Heart left ventricle (tissue), 16 donors: ENCODE measurements at regions of chr10 and their contacts with region 1.

Region 1: DNA sequence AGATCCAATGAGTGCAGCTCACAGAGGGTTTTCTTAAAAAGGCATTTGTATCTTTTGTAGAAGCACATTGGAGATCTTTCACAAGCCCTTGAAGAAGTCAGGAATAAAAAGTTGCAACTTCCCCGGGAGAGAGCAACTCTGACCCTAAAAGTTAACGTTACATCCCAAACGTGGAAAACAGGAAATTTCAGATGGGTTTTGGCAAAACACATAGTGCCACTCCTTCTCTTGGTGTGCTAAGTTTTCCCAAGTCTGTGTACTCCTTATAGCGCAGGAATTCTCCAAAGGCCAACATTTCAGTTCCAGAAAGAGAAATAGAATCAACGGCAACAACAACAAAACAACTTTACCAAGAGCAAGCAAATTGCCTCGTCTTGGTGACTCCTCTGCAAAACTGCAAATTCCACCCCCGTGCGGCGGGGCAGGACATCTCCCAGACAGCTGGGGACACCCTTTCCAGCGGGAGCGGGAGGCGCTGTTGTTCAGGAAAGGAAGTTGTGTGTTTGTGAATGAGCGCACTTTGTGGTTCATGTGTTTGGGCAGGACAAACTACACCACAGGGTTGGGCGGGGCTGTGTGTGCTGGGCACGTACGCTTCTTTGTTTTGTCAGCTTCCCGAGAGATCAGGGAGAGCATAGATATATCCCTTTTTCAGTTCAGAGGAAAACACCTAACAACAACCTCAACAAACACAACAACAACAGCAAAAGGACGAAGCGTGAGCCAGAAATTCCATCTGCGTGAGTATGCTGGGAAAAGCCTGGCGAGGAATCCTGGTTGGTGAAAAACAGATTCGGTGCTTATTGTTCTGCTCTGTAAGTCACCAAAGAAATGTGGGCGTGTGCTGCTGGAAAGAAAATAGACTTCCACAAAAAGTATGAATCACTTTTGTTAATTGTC is 294.7 kb upstream of the PITRM1 start:
- DNase-seq: peak; percentile 80 to 90 (median 85)
- ATAC-seq: peak; percentile 60 to 85 (median 82)
- H3K4me3 ChIP-seq: peak overlapping the region in 9 of 12 donors; percentile 4 to 40 (median 29)
- H3K27ac ChIP-seq: peak overlapping the region; percentile 74 to 97 (median 92)
- H3K4me1 ChIP-seq: peaks cover 0 to 69% (median 46%) of the 10 kb centered on the region in 12 donors
- H3K27me3 ChIP-seq: no peaks in the 10 kb centered on the region
- CTCF ChIP-seq: peak; percentile 35 to 75 (median 54)
- POLR2A ChIP-seq: no peak

Region 2: DNA sequence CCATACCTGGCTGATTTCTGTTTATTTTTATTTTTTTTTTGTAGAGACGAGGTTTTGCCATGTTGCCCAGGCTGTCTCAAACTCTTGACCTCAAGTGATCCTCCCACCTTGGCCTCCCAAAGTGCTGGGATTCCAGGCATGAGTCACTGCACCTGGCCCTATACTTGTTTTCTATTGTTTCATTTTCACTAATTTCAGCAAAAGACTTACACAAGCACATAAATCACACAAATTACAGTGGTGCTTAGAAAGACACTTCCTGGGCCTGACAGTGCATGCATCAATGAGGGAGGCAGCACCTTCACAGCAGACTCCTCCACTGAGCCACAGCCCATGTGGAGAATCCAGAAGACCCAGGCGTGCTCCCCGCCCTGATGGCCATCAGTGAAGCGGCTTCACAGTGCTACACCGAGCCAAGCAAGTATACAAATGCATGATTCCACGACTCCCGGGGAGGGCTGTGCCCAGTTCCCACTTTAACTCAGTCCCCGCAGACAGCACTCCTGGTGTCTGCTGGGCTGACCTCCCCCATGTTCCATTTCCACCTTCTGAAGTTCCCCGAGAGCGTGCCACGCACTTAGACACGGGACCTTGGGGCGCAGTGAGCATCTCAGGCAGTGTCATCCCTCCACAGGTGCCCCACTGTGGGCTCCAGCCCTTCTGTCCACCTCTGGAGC is 315.3 kb before region 1 on chr10:
- intact Hi-C with region 1: no loop called
- DNase-seq: no peak
- ATAC-seq: no peak
- H3K4me3 ChIP-seq: no peak overlapping the region
- H3K27ac ChIP-seq: no peak overlapping the region
- H3K4me1 ChIP-seq: no peaks in the 10 kb centered on the region
- H3K27me3 ChIP-seq: no peaks in the 10 kb centered on the region
- CTCF ChIP-seq: no peak
- POLR2A ChIP-seq: no peak

Region 3: GRCh38 chr10:3248888-3249758 is 218.2 kb before region 1 on chr10:
- intact Hi-C with region 1: loop called in 2 of 10 experiments (anchors 5 to 10 kb)
- DNase-seq: no peak
- ATAC-seq: peak in 3 of 4 donors; percentile 77 to 92 (median 79)
- H3K4me3 ChIP-seq: no peak overlapping the region
- H3K27ac ChIP-seq: peak overlapping the region in 7 of 12 donors; percentile 15 to 61 (median 48)
- H3K4me1 ChIP-seq: peaks cover 0 to 5% (median 0%) of the 10 kb centered on the region in 12 donors
- H3K27me3 ChIP-seq: no peaks in the 10 kb centered on the region
- CTCF ChIP-seq: no peak
- POLR2A ChIP-seq: no peak

Region 4: GRCh38 chr10:3347413-3348182 is 119.7 kb before region 1 on chr10:
- intact Hi-C with region 1: no loop called
- DNase-seq: no peak
- ATAC-seq: no peak
- H3K4me3 ChIP-seq: no peak overlapping the region
- H3K27ac ChIP-seq: no peak overlapping the region
- H3K4me1 ChIP-seq: no peaks in the 10 kb centered on the region
- H3K27me3 ChIP-seq: no peaks in the 10 kb centered on the region
- CTCF ChIP-seq: no peak
- POLR2A ChIP-seq: no peak

Region 5: DNA sequence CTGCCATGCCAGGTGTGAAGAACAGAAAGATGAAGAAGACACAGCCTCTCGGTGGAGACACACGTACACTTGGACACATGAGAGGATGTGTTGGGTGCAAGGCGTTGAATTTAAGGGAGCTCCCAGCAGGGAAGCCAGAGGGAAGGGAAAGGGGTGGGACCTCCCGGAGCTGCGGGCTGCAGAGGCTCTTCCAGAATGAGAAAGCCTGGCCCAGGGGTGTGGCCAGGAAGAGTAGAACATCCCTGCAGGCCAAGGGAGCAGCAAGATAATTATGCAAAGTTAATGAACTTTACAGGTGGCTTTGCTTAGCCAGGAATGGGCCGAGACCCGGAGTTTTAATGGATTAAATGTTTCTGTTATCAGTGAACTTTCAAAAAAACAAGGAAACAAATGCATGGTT is 47.4 kb after region 1 on chr10:
- intact Hi-C with region 1: loop called in 1 of 10 experiments (anchors 2 kb)
- DNase-seq: peak in 1 of 5 donors; percentile 48
- ATAC-seq: peak in 3 of 4 donors; percentile 39 to 84 (median 64)
- H3K4me3 ChIP-seq: peak overlapping the region in 2 of 12 donors; percentile 35 to 39
- H3K27ac ChIP-seq: peak overlapping the region in 4 of 12 donors; percentile 2 to 42 (median 26)
- H3K4me1 ChIP-seq: peaks cover 0 to 8% (median 0%) of the 10 kb centered on the region in 12 donors
- H3K27me3 ChIP-seq: no peaks in the 10 kb centered on the region
- CTCF ChIP-seq: no peak
- POLR2A ChIP-seq: no peak

Region 6: DNA sequence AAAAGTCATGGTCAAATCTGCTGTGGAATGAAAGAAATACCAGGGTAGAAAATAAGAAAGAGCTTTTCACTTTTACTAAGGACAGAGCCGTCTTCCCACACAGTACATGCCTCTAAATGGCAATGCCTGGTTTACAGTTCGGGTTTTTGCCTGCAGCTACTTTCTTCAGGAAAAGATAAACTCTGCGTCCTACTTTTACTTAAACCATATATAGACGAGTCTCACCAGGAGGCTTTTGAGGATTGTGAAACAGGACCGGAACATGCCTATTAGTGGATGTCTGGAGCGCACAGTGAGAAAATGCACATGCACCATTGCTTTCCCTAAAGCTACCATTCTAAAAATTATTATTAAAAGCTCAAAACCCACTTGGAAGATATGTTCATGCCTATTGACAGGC is 247.2 kb after region 1 on chr10:
- intact Hi-C with region 1: no loop called
- DNase-seq: no peak
- ATAC-seq: no peak
- H3K4me3 ChIP-seq: no peak overlapping the region
- H3K27ac ChIP-seq: no peak overlapping the region
- H3K4me1 ChIP-seq: no peaks in the 10 kb centered on the region
- H3K27me3 ChIP-seq: no peaks in the 10 kb centered on the region
- CTCF ChIP-seq: no peak
- POLR2A ChIP-seq: no peak

Region 7: DNA sequence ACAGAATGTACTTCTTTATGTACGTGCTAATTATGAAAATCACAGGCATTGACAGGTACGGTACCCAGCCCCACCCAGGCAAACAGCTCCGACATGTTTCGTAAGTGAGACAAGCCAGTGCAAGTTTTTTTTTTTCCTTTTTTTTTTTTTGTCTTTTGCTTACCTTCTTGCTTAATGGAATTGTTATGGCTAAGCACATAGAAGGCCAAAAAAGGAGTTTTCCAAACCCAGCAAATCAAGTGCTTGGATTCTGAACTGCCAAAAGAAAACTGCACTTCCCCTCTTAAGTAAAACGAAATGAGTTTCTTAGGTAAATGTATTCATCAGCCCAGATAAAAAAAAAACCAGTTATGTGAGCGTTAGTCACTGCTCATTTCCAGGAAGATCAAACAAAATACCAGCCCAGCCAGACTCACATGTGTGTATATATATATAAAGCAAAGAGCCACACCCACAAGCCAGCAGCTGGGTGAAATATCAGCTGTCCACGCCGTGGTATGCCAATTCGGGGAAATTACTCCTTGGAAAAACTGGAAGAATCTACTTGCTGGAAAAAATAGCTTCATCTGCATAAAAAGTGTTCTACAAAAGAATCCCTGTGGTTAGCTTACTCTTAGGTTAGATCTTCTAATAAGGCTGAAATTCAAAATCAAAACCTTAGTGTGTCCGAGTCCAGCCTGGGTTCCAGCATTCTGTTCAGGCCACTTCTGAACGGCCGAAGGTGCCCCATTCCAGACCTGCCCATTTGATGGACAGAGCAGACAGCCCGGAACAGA is 309.7 kb after region 1 on chr10:
- intact Hi-C with region 1: loop called in 6 of 10 experiments (anchors 5 to 10 kb)
- DNase-seq: peak in 3 of 5 donors; percentile 49 to 61 (median 51)
- ATAC-seq: peak in 3 of 4 donors; percentile 30 to 36 (median 34)
- H3K4me3 ChIP-seq: peak overlapping the region in 2 of 12 donors; percentile 2 to 100
- H3K27ac ChIP-seq: peak overlapping the region in 11 of 12 donors; percentile 66 to 100 (median 99)
- H3K4me1 ChIP-seq: peaks cover 23 to 78% (median 72%) of the 10 kb centered on the region in 12 donors
- H3K27me3 ChIP-seq: no peaks in the 10 kb centered on the region
- CTCF ChIP-seq: no peak
- POLR2A ChIP-seq: no peak